ENCODE measurements at regions of chr3 and their contacts with region 1.

Region 1: GRCh38 chr3:4986782-4987537 is 7.7 kb downstream of the BHLHE40 start:
- DNase-seq: peak; percentile 96 to 99
- H3K4me3 ChIP-seq: peak overlapping the region; percentile 44 to 45
- H3K27ac ChIP-seq: peak overlapping the region; percentile 95 to 99
- H3K4me1 ChIP-seq: peaks cover 0 to 72% (median 53%) of the 10 kb centered on the region in 4 donors
- H3K27me3 ChIP-seq: no peaks in the 10 kb centered on the region
- CTCF ChIP-seq: peak in 1 of 2 experiments; percentile 7

Region 2: GRCh38 chr3:4716706-4717363 is 270.1 kb before region 1 on chr3:
- intact Hi-C with region 1: loop called (anchors 5 kb)
- DNase-seq: no peak
- H3K4me3 ChIP-seq: no peak overlapping the region
- H3K27ac ChIP-seq: peak overlapping the region; percentile 71 to 79
- H3K4me1 ChIP-seq: peaks cover 0 to 59% (median 38%) of the 10 kb centered on the region in 4 donors
- H3K27me3 ChIP-seq: no peaks in the 10 kb centered on the region
- CTCF ChIP-seq: no peak

Region 3: GRCh38 chr3:4826237-4827100 is 160.5 kb before region 1 on chr3:
- intact Hi-C with region 1: loop called (anchors 5 kb)
- DNase-seq: peak; percentile 82 to 96
- H3K4me3 ChIP-seq: no peak overlapping the region
- H3K27ac ChIP-seq: peak overlapping the region; percentile 69 to 75
- H3K4me1 ChIP-seq: peaks cover 0 to 67% (median 58%) of the 10 kb centered on the region in 4 donors
- H3K27me3 ChIP-seq: no peaks in the 10 kb centered on the region
- CTCF ChIP-seq: no peak

Region 4: DNA sequence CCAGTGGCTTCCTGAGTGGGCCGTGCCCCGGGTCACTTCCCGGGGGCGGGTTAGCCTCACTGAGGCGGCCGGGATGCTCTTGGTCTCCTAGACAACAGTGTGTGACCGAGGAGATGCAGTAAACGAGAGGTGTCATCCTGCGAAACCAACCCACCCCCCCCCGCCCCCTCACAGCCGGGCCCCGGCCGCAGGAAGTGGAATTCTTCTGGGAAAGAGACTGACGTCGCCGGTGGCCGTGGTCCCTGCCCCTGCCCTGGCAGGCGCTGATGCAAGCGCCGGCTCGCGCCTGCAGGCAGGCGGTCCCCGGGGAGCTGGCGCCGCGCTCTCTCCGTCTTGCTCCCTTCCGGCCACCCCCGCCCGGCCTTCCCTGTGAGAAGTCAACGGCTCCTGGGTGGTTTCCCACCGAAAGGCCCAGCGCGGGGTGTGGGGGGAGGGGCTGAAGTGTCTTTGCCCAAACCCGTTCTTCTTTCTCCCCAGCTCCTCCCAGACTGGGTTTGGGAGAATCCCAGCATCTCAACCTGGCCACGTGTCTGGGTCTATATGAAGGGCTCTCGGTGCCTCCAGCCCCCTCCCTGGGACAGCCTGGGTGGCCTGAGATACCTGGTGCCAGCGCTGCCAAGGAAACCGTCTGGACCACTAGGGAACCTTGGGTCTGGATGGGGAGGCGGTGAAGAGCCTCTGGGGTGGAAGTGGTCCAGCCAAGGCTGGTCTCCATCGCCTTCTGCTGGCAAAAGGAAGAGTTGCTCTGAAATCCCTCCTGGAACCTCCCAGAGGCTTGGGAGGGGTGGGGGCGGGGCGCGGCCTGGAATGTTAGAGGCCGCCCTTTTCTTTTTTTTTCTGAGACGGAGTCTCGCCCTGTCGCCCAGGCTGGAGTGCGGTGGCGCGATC is 39.6 kb after region 1 on chr3:
- intact Hi-C with region 1: loop called (anchors 5 kb)
- DNase-seq: peak; percentile 85 to 98
- H3K4me3 ChIP-seq: peak overlapping the region; percentile 50 to 57
- H3K27ac ChIP-seq: peak overlapping the region; percentile 79 to 85
- H3K4me1 ChIP-seq: peaks cover 0 to 19% (median 7%) of the 10 kb centered on the region in 4 donors
- H3K27me3 ChIP-seq: no peaks in the 10 kb centered on the region
- CTCF ChIP-seq: peak; percentile 75 to 83

Measured in tibial artery (tissue), 4 donors.